Heart right ventricle (tissue), 16 donors: ENCODE measurements at regions of chr2 and their contacts with region 1.

Region 1: GRCh38 chr2:60053791-60054190 is 499.7 kb downstream of the BCL11A start:
- DNase-seq: no peak
- ATAC-seq: no peak
- H3K4me3 ChIP-seq: no peak overlapping the region
- H3K27ac ChIP-seq: peak overlapping the region in 7 of 10 donors; percentile 43 to 82 (median 77)
- H3K4me1 ChIP-seq: peaks cover 0 to 17% (median 7%) of the 10 kb centered on the region in 9 donors
- H3K27me3 ChIP-seq: no peaks in the 10 kb centered on the region
- CTCF ChIP-seq: no peak

Region 2: GRCh38 chr2:60104514-60105505 is 51.0 kb after region 1 on chr2:
- intact Hi-C with region 1: loop called in 2 of 10 experiments (anchors 2 to 10 kb)
- DNase-seq: no peak
- ATAC-seq: no peak
- H3K4me3 ChIP-seq: no peak overlapping the region
- H3K27ac ChIP-seq: no peak overlapping the region
- H3K4me1 ChIP-seq: peaks cover 0 to 8% (median 0%) of the 10 kb centered on the region in 9 donors
- H3K27me3 ChIP-seq: no peaks in the 10 kb centered on the region
- CTCF ChIP-seq: no peak